ENCODE measurements at regions of chr15 and their contacts with region 1.

Region 1: GRCh38 chr15:40731034-40731433 is 24.0 kb downstream of the RMDN3 start:
- DNase-seq: no peak
- H3K4me3 ChIP-seq: no peak overlapping the region
- H3K27ac ChIP-seq: no peak overlapping the region
- H3K4me1 ChIP-seq: no peaks in the 10 kb centered on the region
- H3K27me3 ChIP-seq: no peaks in the 10 kb centered on the region
- CTCF ChIP-seq: no peak

Region 2: GRCh38 chr15:40706121-40706520 is 24.9 kb before region 1 on chr15:
- CTCF ChIA-PET with region 1: interaction called, 6 read pairs
- POLR2A ChIA-PET with region 1: interaction called, 17 read pairs
- intact Hi-C with region 1: no loop called
- DNase-seq: peak in 1 of 2 experiments; percentile 80
- H3K4me3 ChIP-seq: no peak overlapping the region
- H3K27ac ChIP-seq: 0 out of 2 replicates have a peak overlapping the region, but pooled peaks have one; percentile 16
- H3K4me1 ChIP-seq: no peaks in the 10 kb centered on the region
- H3K27me3 ChIP-seq: no peaks in the 10 kb centered on the region
- CTCF ChIP-seq: no peak

Region 3: GRCh38 chr15:40793216-40793989 is 62.4 kb after region 1 on chr15:
- CTCF ChIA-PET with region 1: interaction called, 11 read pairs
- POLR2A ChIA-PET with region 1: no interaction called
- intact Hi-C with region 1: no loop called
- DNase-seq: peak; percentile 73 to 91
- H3K4me3 ChIP-seq: no peak overlapping the region; the same call in 1 of the 2 replicates
- H3K27ac ChIP-seq: peak overlapping the region; percentile 88
- H3K4me1 ChIP-seq: peaks cover 80% of the 10 kb centered on the region
- H3K27me3 ChIP-seq: no peaks in the 10 kb centered on the region
- CTCF ChIP-seq: no peak

Measured in PC-9 (cell line).